ENCODE measurements at regions of chr17 and their contacts with region 1.

Region 1: GRCh38 chr17:7583253-7584109 is at the start of gene MPDU1:
- DNase-seq: peak; percentile 91 to 97 (median 94)
- ATAC-seq: peak; percentile 79 to 87 (median 85)
- H3K4me3 ChIP-seq: peak within 1 kb of the TSS; percentile 79 to 85
- H3K4me3 Mint-ChIP-seq: peak within 1 kb of the TSS; percentile 90 to 99 (median 98)
- H3K27ac ChIP-seq: peak within 1 kb of the TSS; percentile 91
- H3K27ac Mint-ChIP-seq: peak within 1 kb of the TSS; percentile 99 to 100
- H3K4me1 ChIP-seq: peaks cover 27 to 61% of the 10 kb centered on the region in 2 experiments
- H3K4me1 Mint-ChIP-seq: peaks cover 53 to 60% (median 55%) of the 10 kb centered on the region in 3 donors
- H3K27me3 ChIP-seq: no peaks in the 10 kb centered on the region
- H3K27me3 Mint-ChIP-seq: no peaks in the 10 kb centered on the region
- total RNA-seq, gene MPDU1: 27.0 to 31.4 (median 28.6) TPM

Region 2: DNA sequence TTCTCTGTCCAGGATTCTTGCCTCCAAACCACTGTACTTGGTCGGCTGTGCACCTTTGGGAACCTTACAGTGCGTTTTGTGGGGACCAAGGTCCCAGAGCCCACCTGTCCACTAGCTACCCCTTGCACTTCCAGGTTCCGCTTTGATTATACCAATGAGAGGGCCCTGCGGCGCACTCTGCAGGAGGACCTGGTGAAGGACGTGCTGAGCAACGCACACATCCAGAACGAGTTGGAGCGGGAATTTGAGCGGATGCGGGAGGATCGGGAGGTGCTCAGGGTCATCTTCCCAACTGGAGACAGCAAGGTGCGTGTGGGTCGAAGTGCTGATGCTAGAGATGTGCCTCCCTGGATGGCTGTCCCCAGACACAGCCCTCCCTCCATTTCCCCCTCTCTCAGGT is 80.5 kb before region 1 on chr17:
- CTCF ChIA-PET with region 1: no interaction called
- POLR2A ChIA-PET with region 1: no interaction called
- DNase-seq: peak in 2 of 35 experiments; percentile 22 to 23
- ATAC-seq: peak in 1 of 4 experiments; percentile 34
- H3K4me3 ChIP-seq: no peak overlapping the region
- H3K4me3 Mint-ChIP-seq: no peak overlapping the region
- H3K27ac ChIP-seq: no peak overlapping the region
- H3K27ac Mint-ChIP-seq: no peak overlapping the region
- H3K4me1 ChIP-seq: no peaks in the 10 kb centered on the region
- H3K4me1 Mint-ChIP-seq: peaks cover 0 to 10% (median 0%) of the 10 kb centered on the region in 3 donors
- H3K27me3 ChIP-seq: no peaks in the 10 kb centered on the region
- H3K27me3 Mint-ChIP-seq: no peaks in the 10 kb centered on the region

Region 3: DNA sequence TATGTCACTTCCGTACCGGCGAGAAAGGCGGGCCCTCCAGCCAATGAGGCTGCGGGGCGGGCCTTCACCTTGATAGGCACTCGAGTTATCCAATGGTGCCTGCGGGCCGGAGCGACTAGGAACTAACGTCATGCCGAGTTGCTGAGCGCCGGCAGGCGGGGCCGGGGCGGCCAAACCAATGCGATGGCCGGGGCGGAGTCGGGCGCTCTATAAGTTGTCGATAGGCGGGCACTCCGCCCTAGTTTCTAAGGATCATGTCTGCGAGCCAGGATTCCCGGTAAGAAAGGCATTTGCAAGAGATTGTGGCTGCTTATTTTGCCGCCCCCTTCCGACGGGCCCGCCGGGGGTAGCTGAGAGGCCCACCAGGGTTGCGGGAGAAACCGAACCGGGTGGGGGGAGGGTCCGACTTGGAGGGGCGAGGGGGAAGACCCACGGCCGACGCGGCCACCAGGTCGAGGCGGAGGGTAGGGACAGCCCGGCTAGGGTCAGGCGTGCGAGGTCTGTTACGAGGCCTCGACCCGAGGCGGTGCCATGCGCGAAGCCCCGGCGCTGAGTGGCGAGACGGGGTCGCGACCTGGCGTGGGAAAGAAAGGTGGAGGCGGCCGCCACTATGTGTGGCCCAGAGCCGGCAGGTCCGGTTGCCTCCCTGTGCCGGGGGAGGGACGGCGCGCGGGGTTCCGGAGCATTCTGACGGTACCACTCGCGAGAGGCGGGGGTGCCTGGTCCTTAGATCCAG is 10.7 kb before region 1 on chr17:
- CTCF ChIA-PET with region 1: interaction called in 1 of 2 experiments, 4 read pairs
- POLR2A ChIA-PET with region 1: interaction called in 1 of 2 experiments, 10 read pairs
- DNase-seq: peak in 33 of 35 experiments; percentile 27 to 100 (median 99)
- ATAC-seq: peak; percentile 83 to 85 (median 84)
- H3K4me3 ChIP-seq: peak overlapping the region; percentile 83 to 98
- H3K4me3 Mint-ChIP-seq: peak overlapping the region; percentile 95 to 98 (median 96)
- H3K27ac ChIP-seq: peak overlapping the region; percentile 93
- H3K27ac Mint-ChIP-seq: peak overlapping the region; percentile 96 to 99
- H3K4me1 ChIP-seq: peaks cover 21 to 43% of the 10 kb centered on the region in 2 experiments
- H3K4me1 Mint-ChIP-seq: peaks cover 48 to 54% (median 49%) of the 10 kb centered on the region in 3 donors
- H3K27me3 ChIP-seq: no peaks in the 10 kb centered on the region
- H3K27me3 Mint-ChIP-seq: no peaks in the 10 kb centered on the region

Region 4: DNA sequence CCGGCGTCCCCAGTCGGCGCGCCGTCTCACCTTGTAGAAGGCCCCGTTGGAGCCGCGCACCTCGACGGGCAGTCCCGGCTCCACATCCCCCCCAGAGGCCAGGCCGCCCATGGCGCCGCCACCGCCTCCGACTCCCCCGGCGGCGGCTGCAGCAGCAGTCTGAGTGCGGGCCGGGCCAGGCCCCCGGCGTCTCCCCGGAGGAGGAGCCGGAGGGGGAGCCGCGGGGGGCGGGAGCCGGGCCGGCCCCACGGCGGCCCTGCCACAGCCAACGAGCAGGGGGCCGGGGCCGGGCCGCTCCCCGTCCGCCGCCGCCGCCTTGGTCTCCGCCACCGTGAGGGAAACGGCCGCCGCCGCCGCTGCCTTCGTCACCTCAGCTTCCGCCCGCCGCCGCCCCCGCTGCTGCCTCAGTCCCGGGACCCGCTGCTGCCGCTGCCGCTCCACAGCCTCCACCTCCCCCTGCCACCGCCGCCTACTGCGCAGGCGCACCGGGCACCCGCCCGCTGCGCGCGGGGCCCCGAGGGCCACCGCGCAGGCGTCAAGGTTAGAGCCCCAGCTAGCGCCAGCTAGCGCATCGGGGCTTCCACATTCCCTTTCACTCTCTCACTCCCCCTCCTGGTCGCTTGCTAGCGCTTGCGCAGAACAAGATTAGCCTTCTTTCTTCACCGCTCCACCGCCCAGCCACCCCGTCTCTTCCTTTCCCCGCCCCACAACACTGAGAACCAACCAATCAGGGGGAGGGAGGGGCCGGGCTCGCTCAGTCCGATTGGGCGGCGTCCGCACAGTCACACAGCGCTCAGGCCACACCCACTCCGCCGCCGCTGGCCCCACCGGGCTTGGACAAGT is 31.2 kb after region 1 on chr17 and contains the start of gene FXR2:
- CTCF ChIA-PET with region 1: interaction called in 1 of 2 experiments, 13 read pairs
- POLR2A ChIA-PET with region 1: interaction called in 1 of 2 experiments, 4 read pairs
- DNase-seq: peak; percentile 93 to 100 (median 99)
- ATAC-seq: peak; percentile 88 to 89 (median 88)
- H3K4me3 ChIP-seq: peak within 1 kb of the TSS; percentile 77 to 78
- H3K4me3 Mint-ChIP-seq: peak within 1 kb of the TSS; percentile 87 to 91 (median 89)
- H3K27ac ChIP-seq: peak within 1 kb of the TSS; percentile 65
- H3K27ac Mint-ChIP-seq: peak within 1 kb of the TSS; percentile 93 to 97
- H3K4me1 ChIP-seq: peaks cover 12 to 31% of the 10 kb centered on the region in 2 experiments
- H3K4me1 Mint-ChIP-seq: peaks cover 37 to 41% (median 39%) of the 10 kb centered on the region in 3 donors
- H3K27me3 ChIP-seq: no peaks in the 10 kb centered on the region
- H3K27me3 Mint-ChIP-seq: no peaks in the 10 kb centered on the region
- total RNA-seq, gene FXR2: 25.4 to 44.7 (median 40.5) TPM

Region 5: DNA sequence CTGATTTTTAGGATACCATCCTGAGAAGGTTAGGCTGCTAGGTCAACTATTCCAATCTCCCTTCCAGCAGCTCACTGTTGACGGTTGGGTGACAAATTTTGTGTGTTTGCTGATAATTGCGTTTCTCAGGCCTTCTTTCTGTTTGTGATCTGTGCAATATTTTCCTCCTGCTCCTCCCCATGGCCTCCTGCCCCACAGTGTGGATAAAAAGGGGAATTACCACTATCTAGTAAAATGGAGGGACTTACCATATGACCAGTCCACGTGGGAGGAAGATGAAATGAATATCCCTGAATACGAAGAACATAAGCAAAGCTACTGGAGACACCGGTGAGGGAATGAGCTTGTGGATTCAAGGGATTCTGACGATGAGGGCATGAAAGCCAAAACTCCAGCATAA is 314.3 kb after region 1 on chr17:
- CTCF ChIA-PET with region 1: no interaction called
- POLR2A ChIA-PET with region 1: no interaction called
- DNase-seq: peak in 7 of 35 experiments; percentile 7 to 55 (median 13)
- ATAC-seq: peak in 2 of 4 experiments; percentile 46 to 69
- H3K4me3 ChIP-seq: no peak overlapping the region
- H3K4me3 Mint-ChIP-seq: no peak overlapping the region
- H3K27ac ChIP-seq: no peak overlapping the region
- H3K27ac Mint-ChIP-seq: peak overlapping the region; percentile 53 to 71
- H3K4me1 ChIP-seq: no peaks in the 10 kb centered on the region
- H3K4me1 Mint-ChIP-seq: peaks cover 6 to 11% (median 7%) of the 10 kb centered on the region in 3 donors
- H3K27me3 ChIP-seq: no peaks in the 10 kb centered on the region
- H3K27me3 Mint-ChIP-seq: no peaks in the 10 kb centered on the region

Measured in T-cell (primary cell).